ENCODE measurements at regions of chr19 and their contacts with region 1.

Region 1: DNA sequence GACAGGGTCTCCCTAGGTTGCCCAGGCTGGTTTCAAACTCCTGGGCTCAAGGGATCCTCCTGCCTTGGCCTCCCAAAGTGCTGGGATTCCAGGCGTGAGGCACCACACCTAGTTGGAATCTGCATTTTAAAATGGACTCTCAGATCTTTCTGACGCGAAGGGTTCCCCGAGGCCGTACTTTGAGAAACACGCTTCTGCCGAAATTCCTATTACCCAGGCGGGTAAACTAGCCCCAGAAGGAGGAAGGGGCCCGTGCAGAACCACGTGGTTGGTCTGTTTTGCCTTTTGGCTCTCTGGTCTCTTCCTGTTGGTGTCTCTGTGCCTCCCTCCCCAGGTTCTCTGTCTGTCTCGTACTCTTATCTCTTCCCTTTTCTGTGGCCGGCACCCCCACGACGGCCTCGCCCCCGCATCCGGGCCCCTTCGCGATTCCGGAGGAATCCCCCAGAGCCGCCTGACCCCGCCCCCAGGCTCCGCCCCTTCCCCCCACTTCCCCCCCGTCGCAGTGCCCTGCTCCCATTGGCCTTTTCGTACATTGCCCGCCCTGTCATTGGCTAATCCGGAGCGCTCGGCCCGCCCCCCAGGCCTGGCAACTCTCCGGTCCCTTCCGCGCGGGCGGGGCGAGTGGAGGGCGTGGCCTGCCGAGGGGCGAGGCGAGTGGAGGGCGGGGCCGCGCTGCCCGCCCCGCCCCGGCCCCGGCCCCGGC is at the start of gene TNFAIP8L1:
- DNase-seq: peak; percentile 98 to 100 (median 99)
- ATAC-seq: peak; percentile 96
- H3K4me3 ChIP-seq: peak within 1 kb of the TSS; percentile 91
- H3K4me3 Mint-ChIP-seq: peak within 1 kb of the TSS; percentile 91
- H3K27ac ChIP-seq: peak within 1 kb of the TSS; percentile 86 to 87
- H3K27ac Mint-ChIP-seq: peak within 1 kb of the TSS; percentile 94
- H3K4me1 ChIP-seq: peaks cover 59% of the 10 kb centered on the region
- H3K4me1 Mint-ChIP-seq: peaks cover 32% of the 10 kb centered on the region
- H3K27me3 ChIP-seq: no peaks in the 10 kb centered on the region
- H3K27me3 Mint-ChIP-seq: no peaks in the 10 kb centered on the region
- CTCF ChIP-seq: no peak
- total RNA-seq, gene TNFAIP8L1: 4.4 to 5.1 TPM

Region 2: GRCh38 chr19:4342615-4343369 is 296.2 kb before region 1 on chr19:
- CTCF ChIA-PET with region 1: no interaction called
- POLR2A ChIA-PET with region 1: no interaction called
- intact Hi-C with region 1: loop called in 1 of 2 experiments (anchors 5 kb)
- DNase-seq: peak; percentile 79 to 99 (median 86)
- ATAC-seq: peak; percentile 81
- H3K4me3 ChIP-seq: peak overlapping the region; percentile 93
- H3K4me3 Mint-ChIP-seq: peak overlapping the region; percentile 91
- H3K27ac ChIP-seq: peak overlapping the region; percentile 70 to 92
- H3K27ac Mint-ChIP-seq: peak overlapping the region; percentile 83
- H3K4me1 ChIP-seq: peaks cover 40% of the 10 kb centered on the region
- H3K4me1 Mint-ChIP-seq: peaks cover 37% of the 10 kb centered on the region
- H3K27me3 ChIP-seq: no peaks in the 10 kb centered on the region
- H3K27me3 Mint-ChIP-seq: no peaks in the 10 kb centered on the region
- CTCF ChIP-seq: peak; percentile 34

Region 3: DNA sequence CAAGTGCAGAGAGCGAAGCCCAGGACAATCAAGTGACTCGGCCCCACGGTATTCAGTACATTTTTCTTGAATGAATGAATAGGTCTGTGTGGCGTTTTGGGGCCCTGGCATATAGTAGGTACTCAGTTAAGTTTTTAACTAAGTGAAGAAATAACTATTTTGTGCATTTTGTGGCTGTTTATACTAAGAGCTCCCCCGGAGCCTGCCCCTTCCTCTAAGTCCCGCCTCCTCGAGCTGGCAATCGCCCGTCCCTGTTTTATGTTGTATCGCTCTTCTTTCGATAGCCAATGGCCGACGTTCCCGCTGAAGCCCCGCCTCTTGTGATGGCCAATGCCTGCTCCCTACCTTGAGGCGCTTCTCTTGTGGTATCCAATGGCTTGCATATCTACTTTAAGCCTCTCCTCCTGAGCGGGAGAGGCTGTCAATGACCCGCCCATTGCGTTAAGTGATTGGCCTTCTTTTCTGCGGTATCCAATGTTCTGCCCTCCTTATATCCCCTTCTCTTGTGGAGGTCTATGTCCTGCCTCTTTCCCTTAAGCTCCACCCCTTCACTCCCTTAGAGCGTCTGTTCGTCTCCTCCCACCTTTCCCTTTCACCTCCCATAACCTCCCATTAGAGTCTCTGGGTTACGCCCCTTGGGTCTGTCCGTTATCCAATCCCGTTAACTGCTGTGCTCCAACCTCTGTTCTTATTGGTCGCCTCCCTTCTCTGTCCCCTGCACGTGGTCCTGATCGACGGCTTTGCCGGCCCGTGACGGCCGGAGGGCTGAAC is 167.4 kb before region 1 on chr19:
- CTCF ChIA-PET with region 1: interaction called, 3 read pairs
- POLR2A ChIA-PET with region 1: interaction called, 4 read pairs
- intact Hi-C with region 1: loop called in 1 of 2 experiments (anchors 5 kb)
- DNase-seq: peak; percentile 92 to 100 (median 96)
- ATAC-seq: peak; percentile 84
- H3K4me3 ChIP-seq: peak overlapping the region; percentile 64
- H3K4me3 Mint-ChIP-seq: no peak overlapping the region
- H3K27ac ChIP-seq: peak overlapping the region; percentile 71 to 72
- H3K27ac Mint-ChIP-seq: no peak overlapping the region
- H3K4me1 ChIP-seq: peaks cover 35% of the 10 kb centered on the region
- H3K4me1 Mint-ChIP-seq: peaks cover 22% of the 10 kb centered on the region
- H3K27me3 ChIP-seq: no peaks in the 10 kb centered on the region
- H3K27me3 Mint-ChIP-seq: no peaks in the 10 kb centered on the region
- CTCF ChIP-seq: no peak

Region 4: GRCh38 chr19:4567584-4568071 is 71.4 kb before region 1 on chr19:
- CTCF ChIA-PET with region 1: interaction called, 14 read pairs
- POLR2A ChIA-PET with region 1: interaction called, 4 read pairs
- intact Hi-C with region 1: loop called (anchors 2 kb)
- DNase-seq: peak; percentile 42 to 75 (median 52)
- ATAC-seq: peak; percentile 85
- H3K4me3 ChIP-seq: no peak overlapping the region
- H3K4me3 Mint-ChIP-seq: no peak overlapping the region
- H3K27ac ChIP-seq: no peak overlapping the region
- H3K27ac Mint-ChIP-seq: no peak overlapping the region
- H3K4me1 ChIP-seq: no peaks in the 10 kb centered on the region
- H3K4me1 Mint-ChIP-seq: no peaks in the 10 kb centered on the region
- H3K27me3 ChIP-seq: no peaks in the 10 kb centered on the region
- H3K27me3 Mint-ChIP-seq: peaks cover 9% of the 10 kb centered on the region
- CTCF ChIP-seq: peak; percentile 45

Region 5: GRCh38 chr19:4669723-4670480 is 30.9 kb after region 1 on chr19 and contains the start of gene MYDGF:
- CTCF ChIA-PET with region 1: no interaction called
- POLR2A ChIA-PET with region 1: interaction called, 3 read pairs
- intact Hi-C with region 1: loop called in 1 of 2 experiments (anchors 1 kb)
- DNase-seq: peak; percentile 87 to 97 (median 92)
- ATAC-seq: peak; percentile 98
- H3K4me3 ChIP-seq: peak within 1 kb of the TSS; percentile 85
- H3K4me3 Mint-ChIP-seq: peak within 1 kb of the TSS; percentile 90
- H3K27ac ChIP-seq: peak within 1 kb of the TSS; percentile 69 to 75
- H3K27ac Mint-ChIP-seq: peak within 1 kb of the TSS; percentile 72
- H3K4me1 ChIP-seq: peaks cover 18% of the 10 kb centered on the region
- H3K4me1 Mint-ChIP-seq: peaks cover 12% of the 10 kb centered on the region
- H3K27me3 ChIP-seq: no peaks in the 10 kb centered on the region
- H3K27me3 Mint-ChIP-seq: no peaks in the 10 kb centered on the region
- CTCF ChIP-seq: no peak
- total RNA-seq, gene MYDGF: 22.0 to 23.0 TPM

Region 6: DNA sequence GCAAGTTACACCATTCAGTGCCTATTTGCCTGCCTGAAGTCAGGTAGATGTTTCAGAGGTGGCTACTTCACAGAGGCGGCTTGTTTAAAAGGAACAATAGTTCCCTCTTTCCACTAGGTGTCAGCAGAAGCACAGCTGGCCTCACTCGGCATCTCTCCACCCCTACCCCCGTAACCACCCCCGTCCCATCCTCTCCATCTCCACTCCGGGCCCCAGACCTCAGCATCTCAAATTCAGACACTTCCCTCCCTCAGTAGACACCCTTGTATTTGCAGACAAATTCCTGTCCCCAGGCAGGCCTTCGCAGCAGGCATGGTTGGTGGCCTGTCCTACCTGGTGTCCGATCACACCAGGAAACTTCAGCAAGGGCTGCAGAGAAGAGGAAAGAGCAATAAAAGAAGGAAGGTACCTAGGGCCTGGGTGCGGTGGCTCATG is 93.7 kb after region 1 on chr19:
- CTCF ChIA-PET with region 1: no interaction called
- POLR2A ChIA-PET with region 1: no interaction called
- intact Hi-C with region 1: no loop called
- DNase-seq: peak; percentile 11 to 83 (median 40)
- ATAC-seq: peak; percentile 93
- H3K4me3 ChIP-seq: no peak overlapping the region
- H3K4me3 Mint-ChIP-seq: no peak overlapping the region
- H3K27ac ChIP-seq: no peak overlapping the region
- H3K27ac Mint-ChIP-seq: no peak overlapping the region
- H3K4me1 ChIP-seq: peaks cover 6% of the 10 kb centered on the region
- H3K4me1 Mint-ChIP-seq: peaks cover 6% of the 10 kb centered on the region
- H3K27me3 ChIP-seq: no peaks in the 10 kb centered on the region
- H3K27me3 Mint-ChIP-seq: peaks cover 14% of the 10 kb centered on the region
- CTCF ChIP-seq: peak; percentile 75

Region 7: DNA sequence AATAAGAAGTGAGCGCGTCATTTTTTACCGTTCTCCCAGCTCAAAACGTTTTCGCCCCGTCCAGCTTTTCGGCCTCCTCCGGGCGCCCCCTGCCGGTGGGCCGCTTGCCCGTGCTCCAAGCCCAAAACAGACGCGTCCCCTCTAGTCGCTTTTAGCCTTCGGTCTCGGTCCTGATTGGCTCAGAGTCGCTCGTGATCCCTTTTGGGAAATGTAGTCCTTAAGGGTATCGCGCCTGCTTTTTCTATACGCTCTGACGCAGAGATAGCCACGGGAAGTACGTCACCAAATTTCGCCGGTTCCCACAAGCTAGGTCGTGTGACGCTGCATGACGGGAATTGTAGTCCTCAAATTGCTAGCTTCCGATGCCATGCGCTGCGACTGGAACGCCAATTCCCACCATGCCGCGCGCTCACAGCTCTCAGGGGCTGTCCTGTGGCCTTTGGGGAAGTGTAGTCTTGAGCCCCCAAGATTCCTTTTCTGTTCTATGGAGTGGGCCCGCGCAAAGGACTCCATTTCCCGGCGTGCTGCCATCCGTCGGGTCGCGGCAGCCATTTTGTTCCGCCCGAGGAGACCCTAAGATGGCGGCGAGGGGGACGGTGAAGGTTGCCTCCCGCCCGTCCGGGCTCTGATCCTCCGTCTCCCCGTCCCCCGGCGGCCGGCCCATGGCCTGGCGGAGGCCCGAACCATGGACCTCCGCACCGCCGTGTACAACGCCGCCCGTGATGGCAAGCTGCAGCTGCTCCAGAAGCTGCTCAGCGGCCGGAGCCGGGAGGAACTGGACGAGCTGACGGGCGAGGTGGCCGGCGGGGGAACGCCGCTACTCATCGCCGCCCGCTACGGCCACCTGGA is 152.4 kb after region 1 on chr19 and contains the start of gene FEM1A:
- CTCF ChIA-PET with region 1: no interaction called
- POLR2A ChIA-PET with region 1: interaction called, 3 read pairs
- intact Hi-C with region 1: loop called in 1 of 2 experiments (anchors 2 kb)
- DNase-seq: peak; percentile 95 to 100 (median 97)
- ATAC-seq: peak; percentile 93
- H3K4me3 ChIP-seq: peak within 1 kb of the TSS; percentile 76
- H3K4me3 Mint-ChIP-seq: peak within 1 kb of the TSS; percentile 88
- H3K27ac ChIP-seq: peak within 1 kb of the TSS; percentile 83 to 87
- H3K27ac Mint-ChIP-seq: peak within 1 kb of the TSS; percentile 62
- H3K4me1 ChIP-seq: peaks cover 40% of the 10 kb centered on the region
- H3K4me1 Mint-ChIP-seq: peaks cover 26% of the 10 kb centered on the region
- H3K27me3 ChIP-seq: no peaks in the 10 kb centered on the region
- H3K27me3 Mint-ChIP-seq: no peaks in the 10 kb centered on the region
- CTCF ChIP-seq: peak; percentile 99
- total RNA-seq, gene FEM1A: 11.8 to 12.1 TPM

Region 8: DNA sequence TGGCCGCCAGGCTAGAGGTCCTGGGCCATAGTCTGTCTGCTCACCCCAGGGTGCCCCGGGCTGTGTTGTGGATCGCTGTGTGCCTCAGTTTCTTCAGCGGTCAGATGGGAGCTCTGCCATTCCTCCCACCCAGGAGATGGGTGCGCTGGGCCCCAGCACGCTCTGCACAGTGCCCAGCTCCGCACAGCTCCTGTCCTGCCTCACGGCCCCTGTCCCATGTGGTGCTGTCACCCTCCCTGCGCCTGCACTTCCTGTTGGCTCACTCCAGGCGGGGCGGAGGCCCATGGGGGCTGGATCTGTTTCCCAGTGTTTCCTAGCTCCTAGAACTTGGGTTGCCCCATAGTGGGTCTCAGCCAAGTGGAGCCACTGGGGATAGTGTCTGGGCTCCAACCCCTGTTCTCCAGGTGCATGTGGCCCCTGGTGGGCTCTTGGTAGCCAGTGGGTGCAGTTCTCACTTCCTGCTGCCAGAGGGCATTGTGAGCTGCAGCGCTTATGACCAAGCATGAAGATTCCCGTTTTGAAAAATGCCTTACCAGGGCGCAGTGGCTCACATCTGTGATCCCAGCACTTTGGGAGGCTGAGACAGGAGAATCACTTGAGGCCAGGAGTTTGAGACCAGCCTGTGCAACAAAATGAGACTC is 399.8 kb after region 1 on chr19:
- CTCF ChIA-PET with region 1: no interaction called
- POLR2A ChIA-PET with region 1: no interaction called
- intact Hi-C with region 1: no loop called
- DNase-seq: no peak
- ATAC-seq: no peak
- H3K4me3 ChIP-seq: no peak overlapping the region
- H3K4me3 Mint-ChIP-seq: no peak overlapping the region
- H3K27ac ChIP-seq: no peak overlapping the region
- H3K27ac Mint-ChIP-seq: no peak overlapping the region
- H3K4me1 ChIP-seq: peaks cover 2% of the 10 kb centered on the region
- H3K4me1 Mint-ChIP-seq: no peaks in the 10 kb centered on the region
- H3K27me3 ChIP-seq: no peaks in the 10 kb centered on the region
- H3K27me3 Mint-ChIP-seq: no peaks in the 10 kb centered on the region
- CTCF ChIP-seq: no peak

Measured in CD4-positive, alpha-beta T cell (primary cell).